ENCODE measurements at regions of chr16 and their contacts with region 1.

Region 1: DNA sequence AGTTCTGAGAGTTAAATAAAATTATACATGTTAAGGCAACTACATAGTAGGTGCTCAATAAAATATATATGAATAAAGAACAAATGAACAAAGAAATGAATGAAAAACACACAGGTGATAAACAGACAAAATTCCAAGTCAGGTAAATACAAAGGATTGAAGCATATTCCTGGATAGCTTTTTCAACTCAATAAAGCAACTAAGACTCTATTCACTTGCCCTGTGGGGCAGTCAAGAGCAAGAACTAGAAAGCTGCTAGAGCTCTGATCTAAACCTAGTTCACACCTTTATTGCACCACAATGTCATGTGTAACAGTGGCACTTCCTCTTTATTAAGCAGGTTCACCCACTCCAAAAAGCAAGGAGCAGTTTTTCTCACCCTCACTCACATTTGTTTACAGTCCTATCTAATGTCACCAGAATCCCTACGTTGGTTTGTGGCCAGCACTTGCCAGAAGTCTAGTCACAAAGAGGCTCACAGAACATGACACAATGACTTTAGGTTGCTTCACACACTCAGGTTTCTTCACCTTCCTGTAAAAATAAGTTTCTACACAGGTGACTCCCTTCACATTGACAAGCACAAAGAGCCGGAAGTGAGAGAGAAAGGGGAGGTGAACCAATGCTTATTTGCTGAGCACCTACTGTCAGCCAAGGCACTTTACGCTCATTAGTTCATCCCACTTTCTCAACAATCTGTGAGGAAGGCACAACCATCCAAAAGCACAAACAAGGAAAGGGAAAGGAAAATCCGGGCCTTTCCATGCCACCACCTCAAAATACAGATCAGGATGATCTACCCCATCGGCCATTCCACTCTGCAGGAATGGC is 70.8 kb downstream of the XPO6 start:
- DNase-seq: peak; percentile 84
- H3K4me3 Mint-ChIP-seq: peak overlapping the region; percentile 72
- H3K27ac Mint-ChIP-seq: peak overlapping the region; percentile 99
- H3K4me1 Mint-ChIP-seq: peaks cover 85% of the 10 kb centered on the region
- H3K27me3 Mint-ChIP-seq: no peaks in the 10 kb centered on the region

Region 2: DNA sequence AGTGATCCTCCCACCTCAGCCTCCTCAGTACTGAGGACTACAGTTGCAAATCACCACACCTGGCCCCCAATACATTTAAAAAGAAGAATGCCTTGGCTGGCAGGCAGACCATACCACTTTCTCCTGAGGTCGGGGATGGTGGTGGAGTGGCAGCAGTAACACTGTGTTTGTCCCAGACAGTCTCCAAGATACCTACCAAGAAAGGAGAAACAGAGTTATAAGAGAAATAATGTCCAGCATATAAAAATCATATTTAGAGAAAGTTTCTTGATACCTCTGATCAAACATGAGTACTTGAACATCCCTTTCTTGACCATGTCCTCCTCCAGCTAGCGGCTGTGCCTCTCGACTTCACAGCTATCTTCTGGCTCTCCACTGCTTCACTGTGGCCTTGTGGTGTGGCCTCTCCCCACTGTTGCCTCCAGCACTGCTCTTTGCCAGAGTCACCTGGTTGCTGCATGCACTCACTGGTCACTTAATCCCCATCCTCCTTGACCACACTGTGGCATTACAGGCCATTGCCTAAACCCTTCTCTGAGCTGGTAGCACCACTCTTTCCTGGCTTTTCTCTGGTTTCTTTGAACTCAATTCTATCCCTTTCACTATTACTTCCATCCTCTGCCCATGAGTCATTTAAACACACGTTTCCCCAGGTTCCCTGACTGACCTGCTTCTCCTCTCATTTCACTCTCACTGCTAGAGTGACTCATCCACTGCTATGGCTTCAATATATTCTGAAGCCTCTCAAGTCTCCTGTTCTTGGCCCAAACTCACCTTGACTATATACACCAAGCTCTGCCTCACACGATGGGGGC is 25.6 kb after region 1 on chr16:
- CTCF ChIA-PET with region 1: interaction called, 3 read pairs
- POLR2A ChIA-PET with region 1: no interaction called
- intact Hi-C with region 1: loop called (anchors 1 kb)
- DNase-seq: peak; percentile 48
- H3K4me3 Mint-ChIP-seq: no peak overlapping the region
- H3K27ac Mint-ChIP-seq: peak overlapping the region; percentile 82
- H3K4me1 Mint-ChIP-seq: peaks cover 76% of the 10 kb centered on the region
- H3K27me3 Mint-ChIP-seq: no peaks in the 10 kb centered on the region

Region 3: GRCh38 chr16:28193530-28194423 is 52.8 kb after region 1 on chr16:
- CTCF ChIA-PET with region 1: interaction called, 3 read pairs
- POLR2A ChIA-PET with region 1: interaction called, 3 read pairs
- intact Hi-C with region 1: loop called (anchors 1 kb)
- DNase-seq: peak; percentile 75
- H3K4me3 Mint-ChIP-seq: peak overlapping the region; percentile 75
- H3K27ac Mint-ChIP-seq: peak overlapping the region; percentile 98
- H3K4me1 Mint-ChIP-seq: peaks cover 85% of the 10 kb centered on the region
- H3K27me3 Mint-ChIP-seq: no peaks in the 10 kb centered on the region

Region 4: DNA sequence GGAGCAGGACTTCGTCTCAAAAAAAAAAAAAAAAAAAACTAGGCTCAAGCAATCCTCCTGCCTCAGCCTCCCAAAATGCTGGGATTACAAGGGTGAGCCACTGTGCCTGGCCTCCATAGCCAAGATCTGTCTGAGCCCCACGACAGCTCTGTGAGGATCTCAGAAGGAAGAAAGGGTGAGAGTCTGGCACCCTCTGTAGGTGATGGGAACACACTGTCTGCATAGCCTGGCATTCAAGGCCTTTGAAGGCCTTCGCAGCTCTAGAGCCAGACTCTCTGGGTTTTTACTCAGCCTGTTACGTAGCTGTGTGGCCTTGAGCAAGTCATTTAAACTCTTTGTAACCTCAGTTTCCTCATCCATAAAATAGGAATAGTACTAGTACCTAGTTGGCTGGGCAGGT is 77.1 kb after region 1 on chr16:
- CTCF ChIA-PET with region 1: interaction called, 71 read pairs
- POLR2A ChIA-PET with region 1: interaction called, 5 read pairs
- intact Hi-C with region 1: loop called (anchors 1 kb)
- DNase-seq: peak; percentile 75
- H3K4me3 Mint-ChIP-seq: no peak overlapping the region
- H3K27ac Mint-ChIP-seq: no peak overlapping the region
- H3K4me1 Mint-ChIP-seq: no peaks in the 10 kb centered on the region
- H3K27me3 Mint-ChIP-seq: no peaks in the 10 kb centered on the region

Region 5: DNA sequence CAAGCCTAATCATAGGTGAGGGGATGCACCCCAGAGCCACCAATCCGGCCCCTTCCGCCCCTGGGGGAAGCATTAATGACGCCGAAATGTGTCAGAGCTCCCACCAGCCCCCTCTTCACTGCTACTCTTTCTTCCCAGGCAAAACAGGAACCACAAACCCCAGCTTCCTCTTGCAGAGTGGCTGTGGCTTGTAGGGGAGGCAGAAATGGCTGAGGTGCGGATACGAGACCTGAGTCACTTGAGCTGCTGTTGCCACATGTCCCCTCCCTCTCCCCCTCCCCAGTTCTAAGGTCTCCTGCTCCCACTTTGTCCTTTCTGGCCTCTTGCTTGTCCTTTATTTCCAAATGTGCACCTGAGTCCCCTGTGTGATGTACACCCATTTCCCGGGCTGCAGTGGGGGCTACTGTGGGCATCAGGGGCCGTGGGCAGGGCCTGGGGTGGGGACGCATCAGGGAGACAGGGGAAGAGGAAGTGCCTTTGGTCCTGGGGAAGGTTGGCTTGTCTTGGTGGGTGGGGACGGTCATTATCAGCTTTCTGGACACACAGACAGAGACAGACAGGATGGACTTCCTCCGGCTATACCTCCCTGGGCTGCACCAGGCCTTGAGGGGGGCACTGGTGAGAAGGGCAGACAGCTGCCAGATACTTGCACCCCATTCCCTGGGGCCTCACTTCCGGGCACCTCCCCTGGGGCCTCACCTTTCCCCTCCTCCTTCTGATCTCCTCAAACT is 353.3 kb after region 1 on chr16 and contains the start of gene APOBR:
- CTCF ChIA-PET with region 1: no interaction called
- POLR2A ChIA-PET with region 1: no interaction called
- intact Hi-C with region 1: loop called (anchors 1 kb)
- DNase-seq: peak; percentile 94
- H3K4me3 Mint-ChIP-seq: peak within 1 kb of the TSS; percentile 75
- H3K27ac Mint-ChIP-seq: peak within 1 kb of the TSS; percentile 100
- H3K4me1 Mint-ChIP-seq: peaks cover 53% of the 10 kb centered on the region
- H3K27me3 Mint-ChIP-seq: no peaks in the 10 kb centered on the region
- total RNA-seq, gene APOBR: 2.9 to 3.1 TPM